ENCODE measurements at regions of chr15 and their contacts with region 1.

Region 1: GRCh38 chr15:88897456-88898194 is 2.3 kb upstream of the HAPLN3 start:
- DNase-seq: peak; percentile 41
- ATAC-seq: peak; percentile 91
- H3K4me3 ChIP-seq: no peak overlapping the region
- H3K27ac ChIP-seq: no peak overlapping the region
- H3K4me1 ChIP-seq: peaks cover 36% of the 10 kb centered on the region
- H3K27me3 ChIP-seq: peaks cover 6 to 26% of the 10 kb centered on the region in 2 experiments
- CTCF ChIP-seq: peak; percentile 65
- EP300 ChIP-seq: no peak
- POLR2A ChIP-seq: no peak
- RAD21 ChIP-seq: no peak

Region 2: GRCh38 chr15:88738796-88739195 is 158.8 kb before region 1 on chr15:
- CTCF ChIA-PET with region 1: no interaction called
- POLR2A ChIA-PET with region 1: no interaction called
- in situ Hi-C with region 1: no loop called
- intact Hi-C with region 1: no loop called
- DNase-seq: no peak
- ATAC-seq: no peak
- H3K4me3 ChIP-seq: no peak overlapping the region
- H3K27ac ChIP-seq: no peak overlapping the region
- H3K4me1 ChIP-seq: no peaks in the 10 kb centered on the region
- H3K27me3 ChIP-seq: peaks cover 0 to 24% of the 10 kb centered on the region in 2 experiments; a peak in 2 of 5 replicates
- CTCF ChIP-seq: no peak
- EP300 ChIP-seq: no peak
- POLR2A ChIP-seq: no peak
- RAD21 ChIP-seq: no peak

Region 3: DNA sequence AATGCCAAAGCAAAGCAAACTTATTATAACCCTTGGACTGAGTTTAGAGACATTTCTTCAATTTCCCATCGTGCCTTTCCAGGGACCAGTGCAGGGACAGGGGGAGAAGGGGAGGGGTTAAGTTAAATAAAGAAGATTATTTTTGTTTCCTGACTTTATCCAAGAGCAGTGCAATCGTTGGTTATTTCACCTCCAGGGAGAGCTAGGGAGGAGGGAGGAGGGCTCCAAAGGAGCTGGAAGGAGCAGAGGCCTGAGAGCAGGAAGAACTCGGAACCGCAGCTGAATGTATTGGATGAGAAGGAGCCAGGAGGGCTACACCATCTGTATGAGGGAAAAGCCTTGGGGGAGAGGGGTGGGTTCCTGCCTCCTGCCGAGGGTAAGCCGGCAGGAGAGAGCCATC is 22.9 kb before region 1 on chr15:
- CTCF ChIA-PET with region 1: no interaction called
- POLR2A ChIA-PET with region 1: no interaction called
- in situ Hi-C with region 1: no loop called
- intact Hi-C with region 1: no loop called
- DNase-seq: no peak
- ATAC-seq: no peak
- H3K4me3 ChIP-seq: no peak overlapping the region
- H3K27ac ChIP-seq: no peak overlapping the region
- H3K4me1 ChIP-seq: no peaks in the 10 kb centered on the region
- H3K27me3 ChIP-seq: peaks cover 18 to 75% of the 10 kb centered on the region in 2 experiments
- CTCF ChIP-seq: no peak
- EP300 ChIP-seq: no peak
- POLR2A ChIP-seq: no peak
- RAD21 ChIP-seq: no peak

Region 4: DNA sequence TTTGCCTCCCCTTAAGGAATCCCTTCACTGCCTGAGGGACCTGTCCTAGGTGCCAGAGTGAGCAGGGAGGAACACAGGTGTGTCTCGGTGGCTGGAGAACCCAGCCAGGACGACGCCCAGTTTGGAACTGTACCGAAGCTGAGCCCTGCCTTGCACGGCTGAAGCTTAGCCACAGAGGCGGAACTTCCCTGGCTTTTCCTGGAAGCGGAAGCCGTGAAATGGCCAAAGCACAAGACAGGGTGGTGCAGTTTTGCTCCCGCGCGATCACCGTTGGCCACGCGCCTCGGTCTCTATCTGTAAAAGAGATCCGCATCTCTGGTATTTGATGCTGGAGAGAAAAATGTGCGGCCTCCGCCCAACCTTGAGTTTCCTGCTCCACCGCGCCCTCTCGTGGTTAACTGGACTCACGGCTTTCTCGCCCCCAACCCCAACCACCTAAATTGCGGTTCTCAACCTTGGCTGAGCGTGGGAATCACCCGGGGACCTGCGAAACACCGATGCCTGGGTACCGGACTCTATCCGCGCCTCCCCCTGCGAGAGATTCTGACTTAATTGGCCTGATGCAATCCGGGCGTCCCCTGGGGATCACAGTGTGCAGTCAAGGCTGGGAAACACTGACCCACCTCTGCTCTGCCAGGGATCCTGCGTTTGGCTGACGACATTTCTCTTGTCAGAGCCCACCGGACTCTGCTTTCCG is 119.9 kb after region 1 on chr15:
- CTCF ChIA-PET with region 1: interaction called, 8 read pairs
- POLR2A ChIA-PET with region 1: no interaction called
- in situ Hi-C with region 1: no loop called
- intact Hi-C with region 1: loop called (anchors 1 kb)
- DNase-seq: peak; percentile 54
- ATAC-seq: peak; percentile 94
- H3K4me3 ChIP-seq: no peak overlapping the region; a peak in 1 of 6 replicates
- H3K27ac ChIP-seq: no peak overlapping the region
- H3K4me1 ChIP-seq: no peaks in the 10 kb centered on the region
- H3K27me3 ChIP-seq: peaks cover 2 to 14% of the 10 kb centered on the region in 2 experiments; a peak in 4 of 5 replicates
- CTCF ChIP-seq: peak; percentile 86
- EP300 ChIP-seq: no peak
- POLR2A ChIP-seq: no peak
- RAD21 ChIP-seq: peak; percentile 64; the same call in 1 of the 2 replicates

Region 5: DNA sequence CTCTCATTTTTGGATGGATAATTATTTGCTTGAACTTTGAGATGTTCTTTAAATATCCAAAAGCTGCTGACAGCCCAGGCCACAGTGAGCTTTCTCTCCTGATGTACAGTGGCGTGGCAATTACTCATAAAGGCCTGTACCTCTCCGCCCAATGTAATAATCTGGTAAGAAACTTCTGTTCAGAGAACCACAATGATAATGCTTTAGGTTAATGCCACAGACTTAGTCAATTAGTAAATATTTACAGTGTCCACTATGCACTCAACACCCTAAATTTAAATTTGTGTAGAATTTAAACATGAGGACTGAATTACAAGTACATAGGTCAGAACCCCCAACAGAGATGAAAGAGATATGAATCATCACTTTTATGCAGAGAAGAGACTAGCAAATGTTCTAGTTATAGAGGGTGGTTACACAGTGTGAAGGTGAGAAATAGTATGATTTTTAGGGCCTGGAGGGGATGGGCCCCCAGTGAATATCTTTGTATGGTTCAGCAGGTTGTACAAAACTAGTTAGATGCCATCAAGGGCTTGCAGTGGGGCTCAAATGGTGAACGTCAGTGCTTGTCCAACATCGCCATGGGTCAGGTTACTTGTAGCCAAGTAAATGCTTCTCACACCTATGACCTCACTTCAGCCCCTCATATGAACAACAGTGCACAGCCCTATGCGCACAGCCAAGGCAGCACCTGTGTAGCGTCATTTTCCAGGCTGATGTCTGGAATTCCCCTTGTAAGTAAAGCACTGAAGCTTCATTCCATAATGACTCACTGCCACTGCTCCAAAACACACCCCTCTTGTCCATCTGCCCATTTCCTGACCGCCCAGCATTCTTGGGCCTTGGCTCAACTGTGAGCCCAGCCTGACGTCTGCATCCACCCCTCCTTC is 203.9 kb after region 1 on chr15:
- CTCF ChIA-PET with region 1: no interaction called
- POLR2A ChIA-PET with region 1: no interaction called
- in situ Hi-C with region 1: no loop called
- intact Hi-C with region 1: no loop called
- DNase-seq: peak; percentile 45
- ATAC-seq: peak; percentile 70
- H3K4me3 ChIP-seq: no peak overlapping the region
- H3K27ac ChIP-seq: peak overlapping the region; percentile 21
- H3K4me1 ChIP-seq: peaks cover 60% of the 10 kb centered on the region
- H3K27me3 ChIP-seq: no peaks in the 10 kb centered on the region
- CTCF ChIP-seq: no peak
- EP300 ChIP-seq: peak in 1 of 2 experiments; percentile 40; a peak in 1 of 4 replicates
- POLR2A ChIP-seq: no peak
- RAD21 ChIP-seq: no peak

Region 6: GRCh38 chr15:89177633-89178306 is 280.1 kb after region 1 on chr15:
- CTCF ChIA-PET with region 1: no interaction called
- POLR2A ChIA-PET with region 1: no interaction called
- in situ Hi-C with region 1: loop called (anchors 10 kb)
- intact Hi-C with region 1: loop called (anchors 10 kb)
- DNase-seq: peak; percentile 57
- ATAC-seq: peak; percentile 64
- H3K4me3 ChIP-seq: no peak overlapping the region
- H3K27ac ChIP-seq: no peak overlapping the region
- H3K4me1 ChIP-seq: no peaks in the 10 kb centered on the region
- H3K27me3 ChIP-seq: no peaks in the 10 kb centered on the region
- CTCF ChIP-seq: peak; percentile 87
- EP300 ChIP-seq: no peak
- POLR2A ChIP-seq: no peak
- RAD21 ChIP-seq: peak; percentile 83

Measured in HepG2 (cell line).